HCT116 (cell line): ENCODE measurements at regions of chr5 and their contacts with region 1.

Region 1: GRCh38 chr5:151264113-151264512 is 11.1 kb downstream of the GM2A start:
- DNase-seq: no peak
- ATAC-seq: peak; percentile 87
- H3K4me3 ChIP-seq: no peak overlapping the region
- H3K27ac ChIP-seq: no peak overlapping the region
- H3K4me1 ChIP-seq: peaks cover 7 to 16% of the 10 kb centered on the region in 2 experiments; a peak in 3 of 4 replicates
- H3K27me3 ChIP-seq: no peaks in the 10 kb centered on the region
- CTCF ChIP-seq: 0 out of 6 replicates have a peak, but pooled peaks of 1 of the 3 experiments have one; percentile 8
- POLR2A ChIP-seq: no peak
- RAD21 ChIP-seq: no peak

Region 2: DNA sequence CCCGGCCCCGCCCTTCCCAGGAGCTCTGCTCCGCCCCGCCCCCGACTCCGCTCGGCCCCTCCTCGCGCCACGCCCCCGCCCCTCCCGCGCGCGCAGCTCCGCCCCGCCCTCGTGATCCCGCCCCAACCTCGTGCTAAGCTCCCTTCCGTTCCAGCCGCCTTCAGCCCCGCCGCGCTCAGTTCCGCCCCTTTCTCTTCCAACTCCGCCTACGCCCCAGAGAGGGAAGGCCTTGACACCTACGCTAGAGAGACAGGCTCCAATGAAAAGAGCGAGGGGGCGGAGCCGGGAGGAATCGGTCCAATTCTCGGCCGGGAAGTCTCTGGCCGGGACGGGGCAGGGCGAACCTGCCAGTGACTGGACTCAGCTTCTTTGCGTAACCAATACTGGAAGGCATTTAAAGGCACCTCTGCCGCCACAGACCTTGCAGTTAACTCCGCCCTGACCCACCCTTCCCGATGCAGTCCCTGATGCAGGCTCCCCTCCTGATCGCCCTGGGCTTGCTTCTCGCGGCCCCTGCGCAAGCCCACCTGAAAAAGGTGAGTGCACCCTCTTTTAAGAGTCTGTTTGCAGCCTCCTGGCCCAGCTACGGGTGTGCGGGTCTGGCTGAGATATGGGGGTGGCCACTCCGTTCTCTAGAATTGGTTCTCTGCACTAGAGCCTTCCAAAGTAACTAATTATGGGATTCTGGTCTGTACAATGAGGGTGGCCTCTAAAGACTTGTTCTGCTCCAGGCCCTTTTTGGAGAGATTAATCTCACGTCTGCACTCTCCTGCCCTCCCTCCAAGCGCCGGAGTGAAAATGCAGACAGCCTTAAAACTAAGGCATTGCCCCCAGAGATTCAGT is 11.1 kb before region 1 on chr5 and contains the start of gene GM2A:
- CTCF ChIA-PET with region 1: interaction called, 3 read pairs
- POLR2A ChIA-PET with region 1: interaction called, 10 read pairs
- RAD21 ChIA-PET with region 1: no interaction called
- intact Hi-C with region 1: no loop called
- DNase-seq: peak; percentile 99
- ATAC-seq: peak; percentile 98
- H3K4me3 ChIP-seq: peak within 1 kb of the TSS; percentile 70 to 83
- H3K27ac ChIP-seq: no peak within 1 kb of the TSS; the same call in 1 of the 2 replicates
- H3K4me1 ChIP-seq: peaks cover 3 to 34% of the 10 kb centered on the region in 2 experiments; a peak in 3 of 4 replicates
- H3K27me3 ChIP-seq: no peaks in the 10 kb centered on the region
- CTCF ChIP-seq: no peak
- POLR2A ChIP-seq: peak; percentile 39
- RAD21 ChIP-seq: no peak
- total RNA-seq, gene GM2A: 25.0 TPM

Region 3: GRCh38 chr5:151328734-151329133 is 64.6 kb after region 1 on chr5:
- CTCF ChIA-PET with region 1: no interaction called
- POLR2A ChIA-PET with region 1: no interaction called
- RAD21 ChIA-PET with region 1: no interaction called
- intact Hi-C with region 1: no loop called
- DNase-seq: no peak
- ATAC-seq: no peak
- H3K4me3 ChIP-seq: no peak overlapping the region
- H3K27ac ChIP-seq: no peak overlapping the region
- H3K4me1 ChIP-seq: no peaks in the 10 kb centered on the region
- H3K27me3 ChIP-seq: 0 out of 2 replicates have a peak, but pooled peaks cover 5% of the 10 kb centered on the region
- CTCF ChIP-seq: no peak
- POLR2A ChIP-seq: no peak
- RAD21 ChIP-seq: no peak